ENCODE measurements at regions of chr1 and their contacts with region 1.

Region 1: DNA sequence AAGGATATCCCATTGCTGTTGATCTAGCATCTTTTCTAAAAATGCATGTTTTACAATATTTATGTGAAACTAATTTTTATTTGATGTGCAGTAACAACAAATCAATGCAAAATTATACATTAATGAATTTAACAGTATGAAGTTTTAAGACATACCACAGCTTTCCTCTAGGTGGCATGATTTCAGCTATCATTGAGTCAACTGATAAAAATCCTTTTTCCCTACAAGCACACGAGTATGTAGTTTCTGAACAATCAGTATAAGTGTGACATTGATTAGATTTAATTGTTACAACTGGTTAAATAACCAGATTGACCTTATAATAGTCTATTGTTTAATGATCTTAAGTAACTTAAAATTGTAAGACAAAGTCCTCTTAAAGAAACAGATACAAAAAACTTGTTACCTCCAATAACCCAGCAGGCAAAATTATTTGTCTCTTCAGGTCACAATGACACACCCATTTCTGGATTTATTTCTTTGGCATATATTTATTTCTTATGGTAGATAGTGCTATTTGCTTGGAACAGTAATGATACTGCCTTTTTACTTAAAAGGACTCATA is 5.8 kb upstream of the TGFB2 start:
- DNase-seq: no peak
- ATAC-seq: peak in 2 of 4 donors; percentile 63 to 74
- H3K4me3 ChIP-seq: no peak overlapping the region
- H3K27ac ChIP-seq: no peak overlapping the region
- H3K4me1 ChIP-seq: peaks cover 2% of the 10 kb centered on the region
- H3K27me3 ChIP-seq: no peaks in the 10 kb centered on the region
- CTCF ChIP-seq: peak; percentile 76

Region 2: GRCh38 chr1:218219460-218219859 is 119.9 kb before region 1 on chr1:
- intact Hi-C with region 1: no loop called
- DNase-seq: no peak
- ATAC-seq: no peak
- H3K4me3 ChIP-seq: no peak overlapping the region
- H3K27ac ChIP-seq: no peak overlapping the region
- H3K4me1 ChIP-seq: no peaks in the 10 kb centered on the region
- H3K27me3 ChIP-seq: peaks cover 0 to 3% (median 3%) of the 10 kb centered on the region in 3 donors
- CTCF ChIP-seq: no peak

Region 3: DNA sequence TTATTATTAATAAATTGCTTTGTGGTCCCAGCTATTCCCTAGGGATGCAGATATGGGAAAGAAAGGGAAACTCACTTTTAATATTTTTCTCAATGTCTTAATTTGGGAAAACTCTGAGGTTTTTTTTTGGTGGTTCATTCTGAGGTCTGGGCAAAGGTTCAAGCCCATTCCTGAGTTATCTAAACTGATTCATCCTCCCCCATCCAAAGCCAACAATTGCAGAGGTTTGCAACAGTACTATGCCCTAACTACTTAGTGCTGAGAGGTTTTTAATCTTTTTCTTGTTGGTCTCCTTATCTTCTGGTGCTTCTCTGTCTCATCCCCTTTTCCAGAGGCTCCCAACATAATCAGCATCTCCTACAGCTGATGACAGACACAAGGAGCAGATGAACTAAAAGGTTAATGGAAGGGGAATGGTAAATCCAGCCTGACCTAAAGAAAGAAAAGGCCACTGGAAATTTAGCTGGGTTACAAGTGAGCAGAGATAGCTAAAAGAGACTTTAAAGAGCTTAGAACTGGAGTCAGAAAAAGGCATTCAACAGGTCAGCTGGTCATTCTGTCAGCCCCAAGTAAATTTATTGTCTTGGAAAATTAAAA is 396.2 kb after region 1 on chr1:
- intact Hi-C with region 1: loop called in 1 of 2 experiments (anchors 5 kb)
- DNase-seq: no peak
- ATAC-seq: no peak
- H3K4me3 ChIP-seq: no peak overlapping the region
- H3K27ac ChIP-seq: no peak overlapping the region
- H3K4me1 ChIP-seq: no peaks in the 10 kb centered on the region
- H3K27me3 ChIP-seq: no peaks in the 10 kb centered on the region
- CTCF ChIP-seq: no peak

Region 4: DNA sequence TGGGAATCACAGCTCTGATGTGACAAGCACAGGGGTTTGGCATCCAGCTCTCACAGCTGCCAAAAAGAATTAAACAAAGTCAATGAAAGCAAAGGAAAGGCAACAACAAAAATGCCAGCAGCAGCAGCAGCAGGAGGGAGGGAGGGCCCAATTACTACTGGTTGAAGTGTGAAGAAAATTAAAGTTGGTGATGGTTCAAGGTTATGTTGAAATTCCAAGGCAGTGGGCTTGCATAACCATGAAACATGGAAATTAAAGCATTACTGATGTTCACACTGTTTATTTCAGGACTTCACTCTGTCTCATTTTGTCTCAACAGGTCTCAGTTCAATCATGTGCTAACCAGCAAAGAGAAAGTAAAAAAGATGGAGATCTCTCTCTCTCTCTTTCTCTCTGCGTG is 614.0 kb after region 1 on chr1:
- intact Hi-C with region 1: no loop called
- DNase-seq: peak in 1 of 2 donors; percentile 19
- ATAC-seq: peak in 2 of 4 donors; percentile 19 to 45
- H3K4me3 ChIP-seq: no peak overlapping the region
- H3K27ac ChIP-seq: no peak overlapping the region
- H3K4me1 ChIP-seq: no peaks in the 10 kb centered on the region
- H3K27me3 ChIP-seq: no peaks in the 10 kb centered on the region
- CTCF ChIP-seq: no peak